ENCODE measurements at regions of chr2 and their contacts with region 1.

Region 1: DNA sequence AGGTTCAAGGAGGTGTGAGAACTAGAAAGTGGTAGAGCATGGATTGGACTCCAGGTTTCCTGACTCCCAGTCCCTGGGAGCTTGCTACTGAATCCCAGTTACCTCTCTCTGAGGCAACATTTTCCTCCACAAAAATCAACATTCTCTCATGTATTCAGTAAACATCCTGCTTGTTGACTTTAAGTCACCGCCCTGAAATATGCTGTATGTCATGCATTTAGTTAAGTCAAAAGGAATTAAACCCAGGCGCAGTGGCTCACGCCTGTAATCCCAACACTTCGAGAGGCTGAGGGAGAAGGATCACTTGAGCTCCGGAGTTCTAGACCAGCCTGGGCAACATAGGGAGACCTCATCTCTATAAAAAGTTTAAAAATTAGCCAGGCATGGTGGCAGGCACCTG is 3.8 kb downstream of the MATN3 start:
- DNase-seq: peak; percentile 91
- ATAC-seq: peak; percentile 27
- H3K4me3 ChIP-seq: peak overlapping the region in 2 of 3 experiments; percentile 4 to 20; a peak in 3 of 6 replicates
- H3K27ac ChIP-seq: peak overlapping the region; percentile 43
- H3K4me1 ChIP-seq: peaks cover 95% of the 10 kb centered on the region
- H3K27me3 ChIP-seq: no peaks in the 10 kb centered on the region; a peak in 1 of 5 replicates
- CTCF ChIP-seq: no peak
- EP300 ChIP-seq: peak; percentile 12 to 65; a peak in 1 of 4 replicates
- POLR2A ChIP-seq: no peak
- RAD21 ChIP-seq: no peak

Region 2: DNA sequence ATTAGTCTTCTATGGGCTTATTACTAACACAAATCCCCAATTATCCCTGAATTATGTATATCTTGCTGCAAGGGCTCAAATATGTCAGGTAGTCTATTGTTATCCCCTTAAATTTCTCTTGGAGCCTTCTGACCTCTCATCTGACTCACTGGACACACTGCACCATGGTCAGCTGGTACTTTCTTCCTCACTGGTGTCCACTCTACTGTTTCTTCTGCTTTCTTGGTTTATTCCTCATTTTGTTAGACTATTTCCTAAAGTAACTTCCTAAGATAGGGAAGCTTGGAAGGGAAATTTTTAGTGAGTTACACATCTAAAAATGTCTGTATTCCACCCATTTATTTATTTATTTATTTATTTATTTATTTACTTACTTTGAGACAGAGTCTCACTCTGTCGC is 45.3 kb before region 1 on chr2:
- CTCF ChIA-PET with region 1: no interaction called
- POLR2A ChIA-PET with region 1: no interaction called
- in situ Hi-C with region 1: no loop called
- intact Hi-C with region 1: no loop called
- DNase-seq: no peak
- ATAC-seq: no peak
- H3K4me3 ChIP-seq: no peak overlapping the region
- H3K27ac ChIP-seq: no peak overlapping the region
- H3K4me1 ChIP-seq: no peaks in the 10 kb centered on the region
- H3K27me3 ChIP-seq: no peaks in the 10 kb centered on the region
- CTCF ChIP-seq: no peak
- EP300 ChIP-seq: no peak
- POLR2A ChIP-seq: no peak
- RAD21 ChIP-seq: no peak

Region 3: DNA sequence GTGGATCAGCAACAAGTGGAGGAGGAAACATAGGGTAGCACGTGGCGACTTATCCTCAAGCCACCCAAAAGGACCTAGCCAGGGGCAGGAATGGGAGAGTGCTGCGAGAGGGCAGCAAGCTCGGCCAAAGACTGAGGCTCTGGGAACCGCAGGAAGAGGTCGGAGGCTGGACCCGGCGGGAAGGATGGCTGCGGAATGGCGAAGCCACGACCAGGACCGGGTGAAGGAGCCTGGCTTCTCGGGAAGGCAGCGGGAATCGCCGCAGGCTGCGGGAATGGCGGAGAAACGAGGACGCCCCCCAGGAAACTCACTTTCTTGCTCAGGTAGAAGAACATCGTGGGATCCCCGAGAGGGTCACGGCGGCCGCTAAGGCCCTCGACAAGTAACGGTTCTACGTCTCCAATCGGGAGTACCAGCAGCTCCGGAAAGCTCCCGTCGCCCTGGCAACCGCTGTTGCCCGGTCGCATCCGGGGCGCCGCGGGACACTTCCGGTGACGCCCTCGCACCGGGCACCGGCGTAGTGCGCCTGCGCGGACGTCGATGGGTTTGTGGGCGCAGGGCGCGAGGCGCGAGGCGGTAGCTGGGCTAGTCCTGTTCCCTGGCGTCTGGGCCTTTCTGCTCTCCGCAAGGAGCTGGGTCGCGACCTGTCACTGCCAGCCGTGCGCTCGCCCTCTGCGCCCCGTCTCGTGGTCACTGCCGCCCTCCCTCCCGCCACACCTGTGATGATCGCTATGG is 18.9 kb before region 1 on chr2 and contains the start of gene WDR35:
- CTCF ChIA-PET with region 1: no interaction called
- POLR2A ChIA-PET with region 1: interaction called, 23 read pairs
- in situ Hi-C with region 1: no loop called
- intact Hi-C with region 1: no loop called
- DNase-seq: peak; percentile 90
- ATAC-seq: peak; percentile 97
- H3K4me3 ChIP-seq: peak within 1 kb of the TSS; percentile 75 to 90 (median 78)
- H3K27ac ChIP-seq: peak within 1 kb of the TSS; percentile 70
- H3K4me1 ChIP-seq: peaks cover 30% of the 10 kb centered on the region
- H3K27me3 ChIP-seq: no peaks in the 10 kb centered on the region; a peak in 1 of 5 replicates
- CTCF ChIP-seq: peak; percentile 42
- EP300 ChIP-seq: peak in 1 of 2 experiments; percentile 9; a peak in 1 of 4 replicates
- POLR2A ChIP-seq: peak; percentile 88 to 99
- RAD21 ChIP-seq: peak; percentile 18; the same call in 1 of the 2 replicates
- total RNA-seq, gene WDR35: 19.6 and 26.6 TPM in 2 replicates